Activated naive CD4-positive, alpha-beta T cell treated with anti-CD3 and anti-CD28 coated beads for 36 hours (primary cell): ENCODE measurements at regions of chr13 and their contacts with region 1.

Region 1: DNA sequence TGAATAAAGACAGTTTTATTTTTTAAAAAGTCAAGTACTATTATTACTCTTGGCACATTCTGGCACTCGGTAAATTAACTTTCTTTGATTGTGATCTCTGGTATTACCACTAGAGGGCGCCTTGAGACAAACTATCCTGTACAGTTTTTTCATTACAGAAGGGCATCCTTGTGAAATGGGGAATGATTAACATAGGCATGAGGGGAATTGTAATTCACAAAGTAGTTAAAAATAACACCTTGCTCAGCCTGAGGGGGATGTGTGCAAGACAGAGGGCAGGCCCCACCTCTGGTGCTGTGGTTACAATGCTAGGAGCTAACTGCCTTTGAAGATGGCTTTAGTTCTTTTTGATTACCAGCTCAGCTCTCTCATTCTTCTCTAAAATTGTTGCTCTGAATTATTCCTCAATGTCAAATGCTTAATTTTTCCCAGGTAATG is 24.2 kb upstream of the C1QTNF9B start:
- DNase-seq: peak; percentile 16
- H3K4me3 Mint-ChIP-seq: no peak overlapping the region
- H3K27ac Mint-ChIP-seq: no peak overlapping the region
- H3K4me1 Mint-ChIP-seq: no peaks in the 10 kb centered on the region
- H3K27me3 Mint-ChIP-seq: peaks cover 32% of the 10 kb centered on the region

Region 2: DNA sequence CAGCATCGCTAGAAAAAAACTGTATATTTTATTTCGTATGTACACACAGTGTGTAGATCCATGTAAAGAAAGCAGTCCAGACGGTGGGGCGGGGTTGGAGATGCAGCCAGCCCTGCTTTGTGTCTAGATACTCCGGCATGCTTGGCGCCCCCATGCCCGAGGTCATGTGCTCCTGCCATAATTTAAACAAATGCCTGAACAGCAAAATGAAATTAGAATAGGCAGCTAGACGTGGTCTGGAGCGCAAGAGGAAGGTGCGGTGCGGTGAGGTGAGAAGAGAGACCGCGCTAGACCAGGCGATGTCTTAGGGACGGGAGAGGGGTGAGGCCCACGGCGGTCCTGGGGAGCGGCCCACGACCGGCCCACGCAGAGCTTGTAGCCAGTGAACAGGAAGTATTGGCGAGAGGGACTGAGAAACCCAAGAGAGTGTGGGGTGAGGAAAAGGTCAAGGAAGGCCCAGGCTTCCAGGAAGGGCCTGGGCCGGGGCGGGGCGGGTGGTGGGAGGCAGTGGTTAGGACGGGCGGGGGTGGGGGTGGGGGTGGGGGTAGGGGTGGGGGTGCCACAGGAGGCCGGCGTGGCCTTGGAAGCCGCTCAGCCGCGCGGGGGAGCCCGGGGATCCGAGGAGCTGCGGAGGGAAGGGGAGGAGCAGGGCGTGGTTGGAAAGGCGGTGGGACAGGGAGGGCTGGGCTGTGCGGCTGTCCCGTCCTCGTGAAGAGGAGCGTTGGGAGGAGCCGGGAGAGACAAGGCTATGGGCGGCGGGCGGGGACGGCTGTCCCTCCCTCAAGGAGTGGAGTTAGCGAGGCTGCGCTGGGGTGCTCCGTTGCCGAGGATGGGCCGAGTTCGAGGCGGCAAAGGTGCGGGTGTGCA is 995.4 kb before region 1 on chr13:
- CTCF ChIA-PET with region 1: no interaction called
- intact Hi-C with region 1: no loop called
- DNase-seq: no peak
- H3K4me3 Mint-ChIP-seq: peak overlapping the region; percentile 36
- H3K27ac Mint-ChIP-seq: no peak overlapping the region
- H3K4me1 Mint-ChIP-seq: peaks cover 9% of the 10 kb centered on the region
- H3K27me3 Mint-ChIP-seq: peaks cover 60% of the 10 kb centered on the region

Region 3: DNA sequence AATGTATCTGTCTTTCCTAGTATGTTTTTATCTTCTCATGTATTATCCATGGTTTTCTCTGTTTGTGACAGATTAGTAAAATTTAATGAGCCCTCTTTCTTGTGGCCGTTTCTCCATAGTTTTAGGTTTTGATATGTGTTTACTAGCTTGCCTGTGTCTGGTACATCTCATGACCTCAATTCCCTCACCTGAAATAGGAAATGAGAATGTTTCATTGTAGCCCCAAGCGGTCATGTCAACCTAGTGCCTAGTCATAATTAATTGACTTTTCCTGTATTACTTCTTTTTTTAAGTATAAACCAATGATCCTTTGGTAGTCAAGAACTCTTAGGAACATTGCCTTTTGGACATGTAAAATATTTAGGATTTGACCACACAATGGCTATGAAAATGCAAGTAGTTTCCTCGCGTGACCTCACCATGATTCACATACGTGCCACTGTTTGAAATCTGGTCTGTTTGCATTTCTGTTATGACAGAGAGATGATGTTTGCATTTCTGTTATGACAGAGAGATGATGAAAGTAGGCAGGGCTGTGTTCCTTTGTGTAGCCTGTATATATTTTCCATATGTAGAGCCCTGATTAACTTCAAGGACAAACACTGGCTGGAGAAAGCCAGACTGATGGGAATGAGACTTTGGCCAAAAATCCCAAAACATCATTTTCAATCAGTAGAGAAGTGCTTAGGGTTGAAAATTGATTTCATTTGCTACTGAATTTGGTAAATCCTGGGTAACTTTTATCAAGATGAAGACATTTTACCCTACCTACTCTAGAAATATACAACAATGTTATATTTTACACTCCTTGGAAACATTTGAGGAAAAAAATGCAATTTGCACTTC is 246.5 kb before region 1 on chr13:
- CTCF ChIA-PET with region 1: no interaction called
- intact Hi-C with region 1: no loop called
- DNase-seq: peak; percentile 19
- H3K4me3 Mint-ChIP-seq: no peak overlapping the region
- H3K27ac Mint-ChIP-seq: no peak overlapping the region
- H3K4me1 Mint-ChIP-seq: peaks cover 9% of the 10 kb centered on the region
- H3K27me3 Mint-ChIP-seq: peaks cover 7% of the 10 kb centered on the region

Region 4: GRCh38 chr13:23903906-23904280 is 17.6 kb before region 1 on chr13:
- CTCF ChIA-PET with region 1: no interaction called
- intact Hi-C with region 1: no loop called
- DNase-seq: no peak
- H3K4me3 Mint-ChIP-seq: no peak overlapping the region
- H3K27ac Mint-ChIP-seq: no peak overlapping the region
- H3K4me1 Mint-ChIP-seq: peaks cover 2% of the 10 kb centered on the region
- H3K27me3 Mint-ChIP-seq: peaks cover 35% of the 10 kb centered on the region

Region 5: GRCh38 chr13:23960566-23961156 is 39.2 kb after region 1 on chr13:
- CTCF ChIA-PET with region 1: interaction called, 8 read pairs
- intact Hi-C with region 1: loop called (anchors 1 kb)
- DNase-seq: peak; percentile 40
- H3K4me3 Mint-ChIP-seq: no peak overlapping the region
- H3K27ac Mint-ChIP-seq: no peak overlapping the region
- H3K4me1 Mint-ChIP-seq: peaks cover 16% of the 10 kb centered on the region
- H3K27me3 Mint-ChIP-seq: no peaks in the 10 kb centered on the region

Region 6: DNA sequence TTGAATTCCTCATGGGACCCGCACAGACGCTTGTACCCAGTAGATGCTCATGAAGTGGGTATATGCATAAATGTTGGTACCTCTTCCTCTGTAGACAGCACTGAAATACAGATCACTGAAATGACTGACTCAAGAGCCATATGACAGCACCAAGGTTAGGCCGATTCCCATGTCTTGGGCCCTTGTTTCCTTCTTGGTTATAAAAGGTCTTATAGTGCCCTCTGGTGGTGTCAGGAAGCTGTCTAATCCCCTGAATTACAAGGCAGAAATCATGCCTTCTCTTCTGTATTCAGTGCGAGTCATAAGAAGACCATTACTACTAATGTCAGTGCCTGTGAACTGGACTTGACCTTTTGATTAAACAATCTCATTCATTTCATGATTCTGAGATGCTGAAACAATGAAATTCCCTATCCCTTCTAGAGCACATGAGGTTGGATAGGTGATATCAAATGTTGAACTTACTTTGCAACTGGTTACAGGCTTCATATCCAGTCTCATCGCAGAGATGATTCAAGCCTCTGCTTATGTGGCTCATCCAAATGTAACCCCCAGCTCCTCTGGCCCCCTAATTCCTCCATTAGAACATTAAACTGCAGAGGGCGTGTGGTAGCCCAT is 298.7 kb after region 1 on chr13:
- CTCF ChIA-PET with region 1: interaction called, 8 read pairs
- intact Hi-C with region 1: loop called (anchors 1 kb)
- DNase-seq: peak; percentile 72
- H3K4me3 Mint-ChIP-seq: no peak overlapping the region
- H3K27ac Mint-ChIP-seq: no peak overlapping the region
- H3K4me1 Mint-ChIP-seq: peaks cover 22% of the 10 kb centered on the region
- H3K27me3 Mint-ChIP-seq: no peaks in the 10 kb centered on the region

Region 7: DNA sequence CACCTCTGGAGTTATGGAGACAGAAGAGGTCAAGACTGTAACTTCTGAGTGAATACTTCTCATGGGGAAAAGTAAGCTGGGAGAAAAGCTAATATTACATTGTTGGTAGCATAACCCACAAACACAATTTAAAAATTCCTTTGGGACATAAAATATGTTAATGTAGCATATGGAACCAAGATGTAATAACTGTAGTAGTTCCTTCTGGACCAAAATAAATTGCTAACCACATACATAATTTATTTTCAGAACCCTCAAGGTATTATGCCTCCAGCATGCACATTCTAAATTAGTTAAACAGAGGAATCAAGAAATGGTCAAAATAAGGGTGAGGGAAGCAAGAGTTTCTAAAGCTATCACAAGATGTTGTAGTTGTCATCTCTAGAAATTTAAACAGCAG is 837.7 kb after region 1 on chr13:
- CTCF ChIA-PET with region 1: no interaction called
- intact Hi-C with region 1: no loop called
- DNase-seq: no peak
- H3K4me3 Mint-ChIP-seq: no peak overlapping the region
- H3K27ac Mint-ChIP-seq: no peak overlapping the region
- H3K4me1 Mint-ChIP-seq: no peaks in the 10 kb centered on the region
- H3K27me3 Mint-ChIP-seq: peaks cover 12% of the 10 kb centered on the region